ENCODE measurements at regions of chr14 and their contacts with region 1.

Region 1: DNA sequence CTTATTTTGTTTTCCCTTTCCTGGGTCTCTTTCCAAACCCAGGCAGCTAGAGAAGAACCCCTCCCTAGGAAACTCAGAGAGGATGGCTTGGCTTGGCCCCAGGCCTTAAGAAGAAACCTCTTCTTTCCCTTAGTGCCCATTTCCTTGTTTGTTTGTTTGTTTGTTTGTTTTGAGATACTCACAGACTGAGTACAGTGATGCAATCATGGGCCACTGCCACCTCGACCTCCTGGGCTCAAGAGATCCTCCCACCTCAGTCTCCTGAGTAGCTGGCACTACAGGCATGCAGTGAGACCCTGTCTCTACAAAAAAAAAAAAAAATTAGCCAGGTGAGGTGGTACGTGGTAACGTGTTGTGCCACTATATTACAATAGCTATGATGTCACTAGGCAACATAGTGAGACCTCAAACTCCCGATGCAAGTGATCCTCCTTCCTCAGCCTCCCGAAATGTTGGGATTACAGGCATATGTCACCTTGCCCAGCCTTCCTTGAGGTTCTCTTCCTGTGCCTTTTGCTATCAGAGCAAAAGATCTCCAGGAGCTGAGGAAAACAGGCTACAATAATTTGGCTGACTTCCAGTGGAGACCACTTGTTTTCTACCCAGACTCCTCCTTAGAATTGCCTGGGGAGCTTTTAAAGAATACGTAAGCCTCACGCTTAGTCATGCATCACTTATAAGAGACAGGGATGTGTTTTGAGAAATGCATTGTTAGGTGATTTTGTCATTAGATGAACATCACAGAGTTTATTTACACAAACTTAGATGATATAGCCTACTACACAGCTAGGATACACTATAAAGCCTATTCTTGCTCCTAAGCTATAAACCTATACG is 34.5 kb upstream of the LGALS3 start:
- DNase-seq: peak; percentile 23
- H3K4me3 ChIP-seq: no peak overlapping the region
- H3K27ac ChIP-seq: peak overlapping the region; percentile 65
- H3K27me3 ChIP-seq: no peaks in the 10 kb centered on the region
- CTCF ChIP-seq: no peak

Region 2: DNA sequence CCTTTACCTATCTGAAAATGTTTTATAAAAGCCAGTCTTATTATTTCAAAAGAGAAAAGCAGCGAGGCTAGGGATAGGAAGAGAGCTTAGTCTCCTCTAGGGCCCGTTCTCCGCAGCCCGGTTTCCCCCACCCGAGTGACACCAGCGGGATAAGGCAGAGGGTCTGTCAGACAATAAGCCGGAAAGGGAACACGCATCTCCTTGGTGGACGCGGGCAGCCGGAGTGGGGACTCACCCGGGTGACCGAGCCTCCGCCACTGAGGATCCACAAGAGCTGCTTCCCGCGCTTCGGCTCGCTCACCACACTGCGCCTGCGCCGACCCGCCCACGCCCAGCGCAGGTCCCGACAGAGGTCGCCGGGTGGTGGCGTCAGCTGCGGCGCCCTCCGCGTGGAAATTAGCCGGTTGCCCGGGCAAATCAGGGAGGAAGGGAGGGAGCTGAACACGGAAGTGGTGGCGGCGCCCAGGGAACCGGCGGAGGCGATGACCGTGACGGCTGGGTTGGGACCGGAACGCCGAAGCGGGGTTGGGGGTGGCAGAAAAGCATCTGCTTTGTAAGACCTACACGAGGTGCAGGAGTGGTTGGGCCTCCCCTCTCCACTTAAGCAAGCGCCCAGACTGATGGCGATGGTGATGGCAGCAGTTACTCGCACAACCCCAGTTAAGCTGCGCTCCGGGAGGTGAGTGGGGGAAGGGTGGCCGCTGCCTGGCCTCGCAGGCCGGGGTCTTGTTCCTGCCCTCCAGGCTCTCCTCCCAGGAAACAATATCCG is 67.6 kb before region 1 on chr14 and contains the starts of genes SOCS4 and WDHD1:
- CTCF ChIA-PET with region 1: interaction called, 10 read pairs
- POLR2A ChIA-PET with region 1: interaction called, 3 read pairs
- DNase-seq: peak; percentile 63
- H3K4me3 ChIP-seq: peak within 1 kb of the TSS; percentile 87
- H3K27ac ChIP-seq: peak within 1 kb of the TSS; percentile 76
- H3K27me3 ChIP-seq: no peaks in the 10 kb centered on the region
- CTCF ChIP-seq: no peak; the same call in 1 of the 2 replicates
- polyA plus RNA-seq, gene SOCS4: 8.1 and 11.1 TPM in 2 replicates
- polyA plus RNA-seq, gene WDHD1: 4.2 and 6.7 TPM in 2 replicates

Region 3: DNA sequence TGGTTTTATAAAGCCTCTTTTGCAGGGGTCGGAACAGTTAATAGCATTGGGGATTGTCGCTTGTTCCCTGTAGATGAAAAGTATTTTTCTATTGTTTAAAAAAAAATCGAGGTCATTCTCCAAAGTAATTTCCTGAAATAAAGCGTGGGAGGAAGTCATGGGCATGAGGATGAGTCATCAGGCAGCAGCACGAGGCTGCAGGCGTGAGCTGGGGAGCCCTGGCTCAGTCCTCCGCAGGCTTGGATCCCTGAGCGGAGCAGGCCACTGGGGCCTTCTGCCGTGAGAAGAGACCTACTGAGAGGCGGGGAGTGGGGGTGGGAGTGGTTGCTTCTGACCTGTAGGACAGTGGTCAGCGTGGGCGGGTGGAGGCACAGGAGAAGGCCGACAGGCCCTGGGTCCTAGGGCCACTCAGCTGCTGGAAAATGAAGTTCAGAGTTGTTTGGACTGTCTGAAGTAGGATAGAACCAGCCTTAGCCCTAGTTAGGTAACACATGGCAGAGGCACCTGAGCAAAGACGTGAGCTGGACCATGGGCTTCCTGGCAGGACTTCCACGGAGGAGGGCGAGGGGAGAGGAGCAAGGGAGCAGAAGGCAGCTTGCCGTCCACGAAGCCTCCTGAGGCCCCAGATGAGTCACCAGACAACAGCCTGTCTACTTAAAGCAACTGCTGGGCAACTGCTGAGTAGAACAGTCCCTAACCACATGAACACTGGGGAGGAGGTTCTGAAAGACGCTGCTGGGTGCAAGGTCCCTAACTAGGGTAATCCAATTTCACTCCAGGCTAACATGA is 13.4 kb after region 1 on chr14:
- CTCF ChIA-PET with region 1: interaction called, 13 read pairs
- POLR2A ChIA-PET with region 1: interaction called, 7 read pairs
- DNase-seq: peak; percentile 93
- H3K4me3 ChIP-seq: peak overlapping the region; percentile 38
- H3K27ac ChIP-seq: peak overlapping the region; percentile 100
- H3K27me3 ChIP-seq: no peaks in the 10 kb centered on the region
- CTCF ChIP-seq: no peak

Region 4: GRCh38 chr14:55129428-55130195 is 35.1 kb after region 1 on chr14:
- CTCF ChIA-PET with region 1: interaction called, 10 read pairs
- POLR2A ChIA-PET with region 1: interaction called, 6 read pairs
- DNase-seq: no peak
- H3K4me3 ChIP-seq: peak overlapping the region; percentile 78
- H3K27ac ChIP-seq: peak overlapping the region; percentile 72
- H3K27me3 ChIP-seq: no peaks in the 10 kb centered on the region
- CTCF ChIP-seq: no peak

Region 5: DNA sequence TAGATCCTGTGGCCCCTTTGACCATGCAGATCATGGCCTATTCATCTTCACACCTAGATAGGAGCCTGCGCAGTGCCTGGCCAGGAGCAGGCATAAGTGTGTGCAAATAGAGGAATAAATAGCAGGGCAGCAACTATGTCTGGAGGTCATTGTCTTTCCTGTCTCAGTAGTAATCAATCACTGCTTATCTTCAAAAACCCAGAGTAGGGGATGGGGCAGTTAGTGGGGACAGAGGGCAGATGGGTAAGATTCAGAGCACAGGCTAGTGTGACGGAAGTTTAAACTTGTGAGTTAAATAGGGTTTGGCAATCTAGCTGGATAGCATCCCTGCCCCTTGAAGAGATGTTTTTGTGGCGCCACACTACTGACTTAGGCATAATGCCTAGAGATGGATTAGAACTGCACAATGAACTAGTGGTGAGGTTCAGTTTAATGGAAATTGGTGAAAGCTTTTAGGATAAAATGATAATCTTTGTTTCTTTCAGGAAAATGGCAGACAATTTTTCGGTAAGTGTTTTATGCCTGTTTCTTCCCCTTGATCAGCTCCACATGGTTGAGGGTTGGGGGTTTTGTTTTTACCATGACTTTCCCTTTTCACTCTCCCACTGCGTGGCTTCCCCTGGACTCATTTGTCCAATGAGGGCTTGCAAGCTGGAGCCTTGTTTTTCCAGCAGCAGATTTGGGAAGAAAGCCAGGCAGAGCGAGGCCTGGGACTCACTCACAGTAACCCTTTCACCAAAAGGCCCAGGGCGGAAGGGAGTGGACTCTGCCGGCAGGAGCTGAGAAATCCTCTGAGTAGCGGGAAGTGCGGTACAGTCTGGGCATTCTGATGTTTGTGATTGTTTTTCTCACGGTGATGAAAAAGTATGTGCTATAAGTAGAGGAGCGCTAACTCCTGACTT is 42.6 kb after region 1 on chr14:
- CTCF ChIA-PET with region 1: interaction called, 13 read pairs
- POLR2A ChIA-PET with region 1: interaction called, 3 read pairs
- DNase-seq: peak; percentile 71
- H3K4me3 ChIP-seq: peak overlapping the region; percentile 33
- H3K27ac ChIP-seq: peak overlapping the region; percentile 32
- H3K27me3 ChIP-seq: no peaks in the 10 kb centered on the region
- CTCF ChIP-seq: 0 out of 2 replicates have a peak, but pooled peaks have one; percentile 7

Region 6: DNA sequence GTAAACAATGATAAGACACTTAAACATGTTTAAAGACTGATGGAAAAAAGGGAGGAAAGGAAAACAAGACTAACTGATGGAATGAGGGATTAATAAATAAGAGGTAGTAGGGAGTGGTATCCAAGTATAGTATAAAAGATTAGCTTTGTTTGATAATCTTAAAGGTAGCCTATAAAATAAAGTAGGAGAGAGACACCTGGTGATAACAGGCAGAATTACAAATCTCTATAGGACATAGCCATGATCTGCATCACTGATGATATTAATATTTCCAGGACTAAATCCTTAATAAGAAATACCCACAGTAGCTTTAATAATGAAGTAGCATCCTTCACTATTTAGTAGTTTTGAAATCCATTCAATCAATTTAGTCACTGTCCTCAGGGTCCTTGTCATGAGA is 66.5 kb after region 1 on chr14:
- CTCF ChIA-PET with region 1: interaction called, 88 read pairs
- POLR2A ChIA-PET with region 1: interaction called, 6 read pairs
- DNase-seq: no peak
- H3K4me3 ChIP-seq: no peak overlapping the region
- H3K27ac ChIP-seq: no peak overlapping the region
- H3K27me3 ChIP-seq: no peaks in the 10 kb centered on the region
- CTCF ChIP-seq: peak; percentile 64

Region 7: GRCh38 chr14:55233591-55233990 is 139.1 kb after region 1 on chr14:
- CTCF ChIA-PET with region 1: no interaction called
- POLR2A ChIA-PET with region 1: no interaction called
- DNase-seq: no peak
- H3K4me3 ChIP-seq: no peak overlapping the region
- H3K27ac ChIP-seq: no peak overlapping the region
- H3K27me3 ChIP-seq: peaks cover 17% of the 10 kb centered on the region
- CTCF ChIP-seq: no peak

Measured in AG04450 (cell line).